Cardiac septum (tissue), 1 donor: ENCODE measurements at regions of chr11 and their contacts with region 1.

Region 1: DNA sequence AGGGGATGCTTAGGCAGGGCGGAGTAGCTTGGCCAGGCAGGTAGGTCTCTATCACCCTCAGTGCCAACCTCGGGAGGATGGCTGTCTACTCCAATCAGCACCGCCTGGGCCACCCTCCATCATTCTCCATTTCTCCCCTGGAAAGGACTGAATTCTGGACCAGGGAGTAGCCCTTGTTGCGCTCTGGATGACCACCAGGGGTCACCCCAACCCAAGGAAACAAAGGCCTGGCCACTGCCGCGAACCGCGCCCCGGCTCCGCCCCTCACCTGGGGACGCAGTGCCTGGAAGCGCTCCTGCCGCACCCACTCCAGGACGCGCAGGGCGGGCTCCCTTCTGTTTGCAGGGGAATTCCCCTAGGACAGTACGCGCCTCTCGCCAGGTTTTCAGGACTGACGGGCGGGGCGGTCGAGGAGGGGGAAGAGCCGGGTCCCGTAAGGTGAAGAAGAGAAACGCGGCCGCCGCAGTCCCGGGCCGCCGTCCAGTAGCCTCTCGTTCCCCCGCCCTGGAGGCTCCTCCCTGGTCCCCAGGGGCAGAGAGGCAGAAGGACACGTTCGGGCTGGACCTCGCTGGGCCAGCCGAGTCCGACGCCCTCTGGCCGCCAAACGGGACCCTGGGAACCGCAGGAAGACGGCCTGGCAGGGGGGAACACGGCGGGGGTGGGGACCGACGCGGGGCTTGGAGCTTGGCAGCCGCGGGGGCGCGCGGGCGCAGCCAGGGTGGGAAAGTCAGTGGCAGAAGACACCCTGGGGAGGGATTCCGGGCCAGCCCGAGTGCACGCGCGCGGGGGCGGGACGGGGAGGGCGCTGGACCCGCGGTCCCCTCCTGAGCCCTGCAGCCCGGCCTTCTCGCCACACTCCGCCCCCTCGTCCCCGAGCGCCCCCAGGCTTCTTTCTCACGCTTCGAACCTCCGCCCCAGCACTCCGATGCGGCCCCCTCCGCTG is 7.1 kb downstream of the SCN4B start:
- DNase-seq: peak; percentile 96

Region 2: DNA sequence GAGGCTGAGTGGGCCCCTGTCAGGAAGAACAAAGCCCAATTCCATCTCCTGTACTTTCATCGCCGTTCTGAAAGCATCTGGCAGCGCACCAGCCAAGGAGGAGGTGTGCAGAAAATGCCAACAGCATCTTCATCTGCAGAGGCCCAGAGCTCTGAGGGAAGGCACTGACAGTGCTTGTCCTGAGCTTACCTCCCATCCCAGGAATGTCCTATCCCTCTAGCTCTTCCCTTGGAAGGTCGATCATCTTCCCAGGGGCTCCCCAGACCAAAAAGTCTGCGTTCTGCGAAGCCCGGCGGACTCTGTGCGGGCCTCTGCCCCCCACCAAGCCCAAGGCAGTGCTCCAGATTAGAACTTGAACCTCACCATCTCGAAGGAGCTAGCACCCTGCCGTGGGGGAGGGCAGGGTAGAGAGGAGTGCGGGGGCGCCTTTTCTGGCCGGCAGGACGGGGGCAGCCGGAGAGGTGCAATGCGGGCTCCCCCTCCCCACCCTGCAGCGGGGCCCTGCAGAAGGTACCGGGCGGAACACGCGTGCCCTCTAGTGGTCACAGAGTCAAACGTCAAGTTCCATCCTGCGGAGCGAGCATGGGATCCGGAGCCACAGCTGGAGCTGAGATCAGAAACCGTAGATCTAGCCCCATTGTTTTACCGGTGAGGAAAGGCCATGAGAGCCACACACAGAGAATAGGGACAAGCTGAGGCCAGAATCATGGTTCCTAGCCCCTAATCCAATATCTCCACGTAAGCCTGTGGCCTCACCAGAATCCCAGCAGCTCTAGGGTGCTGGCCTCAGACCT is 25.9 kb after region 1 on chr11:
- intact Hi-C with region 1: loop called (anchors 1 kb)
- DNase-seq: peak; percentile 91

Region 3: DNA sequence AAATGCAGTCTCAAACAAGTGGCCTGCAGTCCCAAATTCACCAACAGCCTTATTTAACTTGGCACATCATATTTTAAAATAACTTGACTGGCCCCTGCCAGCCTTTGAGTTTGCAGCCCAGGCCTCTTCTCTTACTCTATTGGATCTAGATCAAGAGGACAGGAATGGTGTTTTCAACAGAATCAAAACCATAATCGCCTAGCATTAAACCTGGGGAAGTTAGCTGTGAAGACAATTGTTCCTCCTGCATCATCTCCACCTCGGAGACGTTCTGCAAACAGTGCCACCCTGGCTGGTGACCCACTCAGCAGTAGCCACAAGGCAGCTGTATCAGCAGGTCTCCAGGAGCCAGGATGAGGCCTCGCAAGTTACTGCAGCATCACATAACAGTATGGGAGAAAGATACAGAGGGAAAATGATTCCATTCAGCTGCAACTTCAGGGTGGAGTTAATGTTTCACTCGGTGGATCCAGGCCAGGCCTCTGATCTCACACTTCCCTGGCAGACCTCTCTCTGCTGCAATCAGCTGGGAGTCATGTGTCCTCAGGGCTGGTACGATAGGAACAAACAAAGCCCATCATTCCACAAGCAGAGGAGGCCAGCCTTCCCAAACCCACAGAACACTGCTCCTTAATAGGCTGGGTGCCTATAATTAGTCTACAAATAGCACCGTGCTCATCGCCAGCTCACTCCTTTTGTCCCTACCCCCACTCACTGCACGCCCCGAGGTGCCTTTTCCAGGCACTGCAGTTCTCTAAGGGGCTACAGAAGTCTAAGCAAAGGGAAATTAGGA is 49.5 kb after region 1 on chr11:
- intact Hi-C with region 1: no loop called
- DNase-seq: peak; percentile 90

Region 4: DNA sequence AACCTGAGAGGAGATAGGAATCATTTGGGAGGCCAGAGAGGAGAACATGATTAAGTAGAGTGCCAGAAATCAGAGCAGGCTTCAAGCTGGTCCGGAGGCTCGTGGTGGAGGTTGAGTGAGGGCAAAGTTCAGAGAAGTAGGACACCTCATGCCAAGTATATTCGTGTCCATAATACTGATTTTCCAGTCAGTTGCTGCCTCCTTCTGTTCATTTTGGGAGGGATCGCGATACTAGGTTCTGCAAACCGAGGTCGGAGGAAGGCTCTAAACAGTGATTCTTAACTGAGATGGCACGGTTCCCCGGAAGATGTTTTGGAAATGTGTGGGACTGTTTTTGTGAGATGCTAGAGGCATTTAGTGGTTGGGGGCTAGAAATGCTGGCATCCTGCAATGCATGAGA is 145.4 kb after region 1 on chr11:
- intact Hi-C with region 1: loop called (anchors 1 kb)
- DNase-seq: no peak

Region 5: GRCh38 chr11:118364956-118365615 is 219.5 kb after region 1 on chr11:
- intact Hi-C with region 1: loop called (anchors 5 kb)
- DNase-seq: no peak